ENCODE measurements at regions of chr3 and their contacts with region 1.

Region 1: DNA sequence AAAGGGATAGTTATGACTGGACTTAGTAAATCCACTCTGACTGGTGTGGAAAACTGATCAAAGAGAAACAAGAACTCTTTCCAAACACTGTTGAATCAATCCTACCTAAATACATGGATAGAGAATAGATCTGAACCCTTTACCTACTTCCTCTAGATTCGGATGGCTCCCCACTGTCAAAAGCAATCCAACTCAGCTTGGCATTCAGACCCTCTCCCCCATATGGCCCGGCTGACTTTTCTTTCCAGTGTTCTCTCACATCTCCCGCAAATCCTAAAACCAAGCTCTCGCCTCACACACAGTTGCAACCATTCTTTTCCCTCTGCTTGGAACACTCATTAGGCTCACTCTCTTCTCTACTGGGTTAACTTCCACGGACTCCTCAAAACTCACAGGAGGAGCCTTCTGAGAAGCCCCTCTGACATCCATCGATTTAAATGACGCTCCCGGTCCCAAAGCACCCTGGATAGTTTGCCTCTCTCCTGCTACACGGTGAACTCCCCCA is 639 bp downstream of the SPICE1 start:
- DNase-seq: no peak
- H3K4me3 Mint-ChIP-seq: no peak overlapping the region
- H3K27ac Mint-ChIP-seq: no peak overlapping the region
- H3K4me1 Mint-ChIP-seq: peaks cover 7% of the 10 kb centered on the region
- H3K27me3 Mint-ChIP-seq: peaks cover 24% of the 10 kb centered on the region

Region 2: DNA sequence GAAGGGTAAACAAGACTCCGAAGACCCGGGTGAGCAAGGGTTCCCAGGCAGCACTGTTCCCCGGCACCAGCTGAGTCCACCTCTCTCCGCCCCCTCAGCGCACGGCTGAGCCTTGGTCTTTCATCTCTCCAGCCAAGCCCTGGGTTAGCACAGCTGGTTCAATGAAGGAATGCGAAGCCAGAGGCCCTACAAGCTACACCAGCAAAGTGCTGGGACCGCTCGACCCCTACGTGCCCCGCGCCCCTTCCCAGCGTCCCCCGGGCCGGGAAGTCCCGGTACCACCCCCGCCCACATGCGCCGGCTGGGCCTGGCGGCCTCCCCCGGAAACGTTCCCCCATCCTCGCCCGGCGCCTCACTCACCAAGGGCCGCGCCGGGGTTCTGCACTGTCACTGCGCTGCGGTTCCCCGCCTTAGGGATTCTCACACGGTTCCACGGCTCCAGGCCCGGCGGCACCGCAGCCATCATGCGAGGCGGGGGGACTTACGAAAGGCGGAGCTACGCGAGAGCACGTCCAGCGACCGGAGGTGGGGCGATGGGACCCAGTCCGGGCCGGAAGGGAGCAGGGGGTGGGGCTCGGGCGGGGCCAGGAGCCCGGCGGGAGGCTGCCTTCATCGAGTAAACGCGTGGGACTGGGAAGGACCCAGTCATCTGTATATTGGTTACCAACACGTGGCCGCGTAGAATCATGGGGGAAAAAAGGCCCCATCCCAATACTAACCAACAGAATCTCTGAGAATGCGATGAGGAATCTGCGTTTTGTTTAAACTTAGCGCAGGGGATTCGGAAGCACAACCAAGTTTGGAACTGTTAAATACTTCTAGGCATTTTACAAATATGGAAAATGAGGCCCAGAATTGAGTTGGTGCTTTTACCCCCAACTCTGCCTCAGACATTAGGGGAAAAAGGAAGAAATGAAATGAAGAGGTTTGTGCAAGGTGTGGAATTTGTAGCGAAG is 494.9 kb before region 1 on chr3:
- intact Hi-C with region 1: loop called (anchors 10 kb)
- DNase-seq: peak; percentile 77
- H3K4me3 Mint-ChIP-seq: peak overlapping the region; percentile 91
- H3K27ac Mint-ChIP-seq: peak overlapping the region; percentile 89
- H3K4me1 Mint-ChIP-seq: peaks cover 58% of the 10 kb centered on the region
- H3K27me3 Mint-ChIP-seq: no peaks in the 10 kb centered on the region

Region 3: DNA sequence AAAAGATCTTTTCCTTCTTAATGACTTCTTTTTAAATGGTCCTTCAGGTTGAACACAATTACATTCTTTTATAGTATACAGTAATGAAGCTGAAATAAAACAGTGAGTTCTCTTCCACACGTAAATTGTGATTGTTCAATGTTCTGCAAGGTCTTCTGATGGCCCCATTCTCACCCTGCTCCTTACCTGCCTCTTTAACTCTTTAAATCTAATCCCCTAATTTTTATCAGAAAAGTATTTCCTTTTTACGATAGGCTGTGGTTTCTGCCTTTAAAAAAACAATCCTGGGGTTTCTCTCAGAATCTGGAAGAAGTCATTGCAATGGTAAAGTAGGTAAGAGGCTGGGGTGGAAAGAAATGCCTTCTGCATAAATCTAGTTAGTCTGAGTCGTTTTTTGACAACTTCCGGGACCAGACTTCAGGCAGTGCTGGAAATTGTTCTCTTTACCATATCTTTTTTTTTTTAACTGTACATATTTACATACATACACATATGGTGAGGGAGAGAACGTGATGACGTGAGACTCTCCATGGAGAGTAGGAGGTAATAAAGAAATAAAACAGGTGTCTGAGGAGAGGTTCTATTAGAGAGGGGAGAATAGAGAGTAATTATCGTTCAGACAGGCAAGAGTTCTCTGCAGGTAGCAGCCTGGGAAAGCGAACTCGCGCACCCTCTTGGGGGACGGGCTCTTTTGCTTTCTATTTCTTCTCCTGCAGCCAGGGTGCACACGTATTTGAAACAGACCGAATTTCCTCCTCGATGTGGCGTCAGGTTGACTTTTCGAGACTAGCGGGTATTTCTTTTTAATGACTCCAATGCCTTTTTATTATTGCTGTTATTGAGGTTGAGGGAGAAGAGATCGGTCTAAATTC is 17.7 kb after region 1 on chr3 and contains the start of gene SIDT1:
- intact Hi-C with region 1: loop called (anchors 1 kb)
- DNase-seq: peak; percentile 64
- H3K4me3 Mint-ChIP-seq: peak within 1 kb of the TSS; percentile 100
- H3K27ac Mint-ChIP-seq: peak within 1 kb of the TSS; percentile 99
- H3K4me1 Mint-ChIP-seq: peaks cover 55% of the 10 kb centered on the region
- H3K27me3 Mint-ChIP-seq: peaks cover 10% of the 10 kb centered on the region
- total RNA-seq, gene SIDT1: 11.3 and 12.2 TPM in 2 replicates

Region 4: DNA sequence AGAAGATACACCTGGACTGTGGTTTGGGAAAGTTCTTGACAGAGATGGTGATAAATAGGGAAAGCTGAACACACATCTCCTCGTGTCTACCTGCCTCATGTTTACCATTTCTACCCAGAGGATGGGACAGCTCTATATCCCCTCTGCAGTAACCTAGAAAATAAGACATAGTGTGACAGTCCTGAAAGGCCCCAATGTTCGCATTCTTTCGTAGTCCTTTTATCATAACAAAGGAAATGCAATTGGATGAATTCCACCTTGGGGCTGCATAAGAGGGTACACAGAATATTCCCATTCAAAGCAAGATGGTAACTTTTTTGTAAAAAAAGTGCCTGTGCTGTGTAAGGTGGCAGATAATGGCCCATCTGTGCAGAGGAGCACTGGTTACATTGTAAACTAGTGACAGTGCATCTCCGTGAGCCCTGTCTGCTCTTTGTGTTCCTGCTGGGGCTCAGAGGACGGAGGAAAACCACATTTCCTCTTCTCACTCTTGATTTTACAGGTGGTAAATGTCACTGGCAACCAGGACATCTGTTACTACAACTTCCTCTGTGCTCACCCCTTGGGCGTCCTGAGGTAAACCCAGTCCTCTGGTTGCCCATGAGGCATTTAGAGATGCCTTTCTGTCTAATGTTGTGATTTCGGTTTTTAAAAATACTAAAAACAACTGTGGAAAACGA is 92.4 kb after region 1 on chr3:
- intact Hi-C with region 1: loop called (anchors 1 kb)
- DNase-seq: peak; percentile 47
- H3K4me3 Mint-ChIP-seq: no peak overlapping the region
- H3K27ac Mint-ChIP-seq: no peak overlapping the region
- H3K4me1 Mint-ChIP-seq: peaks cover 24% of the 10 kb centered on the region
- H3K27me3 Mint-ChIP-seq: no peaks in the 10 kb centered on the region

Measured in activated T-helper 1 cell treated with anti-CD3 and anti-CD28 coated beads, Interleukin-12 subunit alpha, Interleukin-12 subunit beta, Interleukin-2, Interleukin-4 antibody, amounts not matched to agents 30 ng/mL and 10 ng/mL and 1 ng/mL, durations not matched to agents 14 hours and 24 hours and 36 hours (primary cell).